CD8-positive, alpha-beta T cell (primary cell): ENCODE measurements at regions of chr14 and their contacts with region 1.

Region 1: DNA sequence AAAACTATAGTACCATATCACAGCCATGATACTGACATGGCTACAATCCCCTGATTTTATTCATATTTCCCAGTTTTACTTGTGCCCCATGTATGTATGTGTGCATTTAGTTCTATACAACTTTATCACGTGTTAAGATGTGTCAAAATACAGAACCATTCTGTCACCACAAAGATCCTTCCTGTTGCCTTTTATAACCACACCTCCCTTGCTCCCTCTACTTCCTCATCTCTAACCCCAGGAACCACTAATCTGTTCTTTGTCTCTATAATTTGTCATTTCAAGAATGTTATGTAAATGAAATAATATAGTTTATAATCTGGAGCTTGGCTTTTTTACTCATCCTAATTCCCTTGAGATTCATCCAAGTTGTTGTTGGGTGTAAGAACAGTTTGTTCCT is 358.4 kb downstream of the DPF3 start:
- DNase-seq: peak in 2 of 9 experiments; percentile 41 to 68
- ATAC-seq: peak; percentile 59
- H3K4me3 ChIP-seq: no peak overlapping the region
- H3K4me3 Mint-ChIP-seq: peak overlapping the region; percentile 5
- H3K27ac ChIP-seq: no peak overlapping the region
- H3K27ac Mint-ChIP-seq: no peak overlapping the region
- H3K4me1 ChIP-seq: peaks cover 46% of the 10 kb centered on the region
- H3K4me1 Mint-ChIP-seq: peaks cover 48% of the 10 kb centered on the region
- H3K27me3 ChIP-seq: peaks cover 0 to 2% of the 10 kb centered on the region in 2 experiments
- H3K27me3 Mint-ChIP-seq: no peaks in the 10 kb centered on the region
- CTCF ChIP-seq: no peak

Region 2: DNA sequence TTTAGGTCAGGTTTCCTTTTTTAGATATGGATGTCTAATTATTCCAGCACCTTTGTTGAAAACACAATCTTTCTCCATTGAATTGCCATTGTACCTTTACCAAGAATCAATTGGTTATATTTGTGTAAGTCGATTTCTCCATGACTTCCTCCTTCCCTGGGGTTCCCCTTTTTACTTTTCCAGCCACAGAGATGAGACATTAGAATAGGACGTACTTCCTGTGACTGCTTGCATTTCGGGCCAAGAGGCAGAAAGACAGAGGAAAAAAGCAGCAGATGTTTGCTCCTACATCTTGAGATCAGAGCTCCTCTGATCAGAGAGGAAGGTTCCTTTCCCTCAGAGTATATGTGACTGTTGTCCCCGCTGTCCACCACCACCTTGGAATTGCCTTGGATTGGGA is 1056.9 kb before region 1 on chr14:
- CTCF ChIA-PET with region 1: no interaction called
- POLR2A ChIA-PET with region 1: no interaction called
- intact Hi-C with region 1: no loop called
- DNase-seq: peak in 1 of 9 experiments; percentile 32
- ATAC-seq: no peak
- H3K4me3 ChIP-seq: no peak overlapping the region
- H3K4me3 Mint-ChIP-seq: no peak overlapping the region
- H3K27ac ChIP-seq: no peak overlapping the region
- H3K27ac Mint-ChIP-seq: no peak overlapping the region
- H3K4me1 ChIP-seq: peaks cover 6% of the 10 kb centered on the region
- H3K4me1 Mint-ChIP-seq: peaks cover 40% of the 10 kb centered on the region
- H3K27me3 ChIP-seq: no peaks in the 10 kb centered on the region
- H3K27me3 Mint-ChIP-seq: no peaks in the 10 kb centered on the region
- CTCF ChIP-seq: no peak

Region 3: GRCh38 chr14:72476657-72477499 is 58.6 kb before region 1 on chr14:
- CTCF ChIA-PET with region 1: no interaction called
- POLR2A ChIA-PET with region 1: no interaction called
- intact Hi-C with region 1: no loop called
- DNase-seq: peak; percentile 2 to 72 (median 43)
- ATAC-seq: peak; percentile 88
- H3K4me3 ChIP-seq: peak overlapping the region; percentile 9 to 14
- H3K4me3 Mint-ChIP-seq: peak overlapping the region; percentile 65
- H3K27ac ChIP-seq: peak overlapping the region in 1 of 2 experiments; percentile 38
- H3K27ac Mint-ChIP-seq: peak overlapping the region; percentile 55
- H3K4me1 ChIP-seq: peaks cover 31% of the 10 kb centered on the region
- H3K4me1 Mint-ChIP-seq: peaks cover 35% of the 10 kb centered on the region
- H3K27me3 ChIP-seq: no peaks in the 10 kb centered on the region
- H3K27me3 Mint-ChIP-seq: no peaks in the 10 kb centered on the region
- CTCF ChIP-seq: no peak

Region 4: DNA sequence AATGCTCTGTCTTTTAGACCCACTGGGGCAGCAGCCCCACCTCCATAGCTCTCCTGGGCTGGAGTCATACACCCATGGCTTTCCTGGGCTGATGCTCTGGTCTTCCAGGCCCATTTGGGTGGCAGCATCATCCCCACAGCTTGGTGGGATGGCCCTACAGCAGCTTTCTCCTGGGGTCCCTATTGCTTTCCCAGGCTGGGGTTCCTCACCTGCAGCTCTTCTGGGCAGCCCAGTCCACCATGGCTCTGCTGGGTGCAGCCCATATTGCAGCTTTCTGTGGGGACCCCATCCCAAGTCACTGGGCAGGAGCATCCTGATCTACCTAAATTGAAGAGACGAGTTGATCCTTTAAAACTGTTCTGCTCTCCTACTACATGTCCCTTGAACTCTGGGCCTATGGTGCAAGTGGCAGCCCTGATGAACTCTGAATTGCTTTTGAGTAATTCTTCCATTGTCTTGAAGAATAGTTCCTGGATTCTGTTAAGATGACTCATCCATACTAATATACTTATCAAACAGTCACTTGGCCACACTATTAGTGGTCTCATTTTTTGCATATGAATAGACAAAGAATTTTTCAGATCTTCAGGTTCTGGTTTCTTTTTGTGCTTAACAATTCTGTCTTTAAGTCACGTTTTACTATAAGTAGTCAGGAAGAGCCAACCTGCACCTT is 31.7 kb before region 1 on chr14:
- CTCF ChIA-PET with region 1: no interaction called
- POLR2A ChIA-PET with region 1: no interaction called
- intact Hi-C with region 1: no loop called
- DNase-seq: peak in 1 of 9 experiments; percentile 17
- ATAC-seq: no peak
- H3K4me3 ChIP-seq: no peak overlapping the region
- H3K4me3 Mint-ChIP-seq: no peak overlapping the region
- H3K27ac ChIP-seq: no peak overlapping the region
- H3K27ac Mint-ChIP-seq: no peak overlapping the region
- H3K4me1 ChIP-seq: no peaks in the 10 kb centered on the region
- H3K4me1 Mint-ChIP-seq: no peaks in the 10 kb centered on the region
- H3K27me3 ChIP-seq: no peaks in the 10 kb centered on the region
- H3K27me3 Mint-ChIP-seq: peaks cover 2% of the 10 kb centered on the region
- CTCF ChIP-seq: no peak

Region 5: DNA sequence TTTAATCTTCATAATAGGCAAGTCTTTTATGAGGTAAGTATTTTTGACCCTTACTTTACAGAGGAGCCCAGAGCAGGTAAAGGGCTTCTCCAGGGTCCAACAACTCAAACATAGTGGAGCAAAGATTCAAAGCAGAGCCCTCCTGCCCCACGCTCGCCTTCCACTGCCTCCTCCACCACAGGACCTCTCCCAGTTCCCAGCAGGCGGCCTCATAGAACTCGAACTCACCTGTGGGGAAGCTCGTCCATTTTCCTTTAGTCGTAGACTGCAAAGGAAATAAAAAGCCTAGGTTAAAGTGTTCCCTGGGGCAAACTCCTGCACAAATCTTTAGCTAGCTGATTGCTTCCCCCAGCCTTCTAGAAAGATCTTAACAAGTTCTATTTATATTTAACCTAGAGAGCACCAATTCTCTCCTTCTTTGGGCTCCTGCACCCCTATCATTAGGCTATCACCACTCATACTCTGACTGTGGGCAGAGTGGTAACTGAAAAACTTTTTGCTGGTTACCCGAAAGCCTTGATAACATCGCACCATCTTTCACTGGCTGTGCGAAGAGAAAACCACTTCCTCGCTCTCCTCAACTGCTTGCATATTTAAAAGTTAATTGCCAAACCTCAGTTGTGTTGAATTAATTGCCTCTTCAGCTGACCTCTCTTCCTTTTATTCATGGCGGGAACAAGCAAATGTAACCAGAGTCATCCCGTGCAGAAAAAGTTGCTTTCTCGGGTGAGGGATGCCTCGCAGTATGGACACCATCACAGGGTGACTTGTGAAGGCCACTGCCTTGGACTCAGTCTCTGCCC is 58.8 kb after region 1 on chr14:
- CTCF ChIA-PET with region 1: no interaction called
- POLR2A ChIA-PET with region 1: no interaction called
- intact Hi-C with region 1: loop called in 1 of 2 experiments (anchors 10 kb)
- DNase-seq: peak in 8 of 9 experiments; percentile 9 to 80 (median 33)
- ATAC-seq: peak; percentile 77
- H3K4me3 ChIP-seq: no peak overlapping the region
- H3K4me3 Mint-ChIP-seq: peak overlapping the region; percentile 9
- H3K27ac ChIP-seq: no peak overlapping the region
- H3K27ac Mint-ChIP-seq: peak overlapping the region; percentile 0
- H3K4me1 ChIP-seq: peaks cover 34% of the 10 kb centered on the region
- H3K4me1 Mint-ChIP-seq: peaks cover 56% of the 10 kb centered on the region
- H3K27me3 ChIP-seq: peaks cover 5 to 16% of the 10 kb centered on the region in 2 experiments
- H3K27me3 Mint-ChIP-seq: peaks cover 13% of the 10 kb centered on the region
- CTCF ChIP-seq: no peak